Posterior vena cava (tissue), 2 donors: ENCODE measurements at regions of chr1 and their contacts with region 1.

Region 1: DNA sequence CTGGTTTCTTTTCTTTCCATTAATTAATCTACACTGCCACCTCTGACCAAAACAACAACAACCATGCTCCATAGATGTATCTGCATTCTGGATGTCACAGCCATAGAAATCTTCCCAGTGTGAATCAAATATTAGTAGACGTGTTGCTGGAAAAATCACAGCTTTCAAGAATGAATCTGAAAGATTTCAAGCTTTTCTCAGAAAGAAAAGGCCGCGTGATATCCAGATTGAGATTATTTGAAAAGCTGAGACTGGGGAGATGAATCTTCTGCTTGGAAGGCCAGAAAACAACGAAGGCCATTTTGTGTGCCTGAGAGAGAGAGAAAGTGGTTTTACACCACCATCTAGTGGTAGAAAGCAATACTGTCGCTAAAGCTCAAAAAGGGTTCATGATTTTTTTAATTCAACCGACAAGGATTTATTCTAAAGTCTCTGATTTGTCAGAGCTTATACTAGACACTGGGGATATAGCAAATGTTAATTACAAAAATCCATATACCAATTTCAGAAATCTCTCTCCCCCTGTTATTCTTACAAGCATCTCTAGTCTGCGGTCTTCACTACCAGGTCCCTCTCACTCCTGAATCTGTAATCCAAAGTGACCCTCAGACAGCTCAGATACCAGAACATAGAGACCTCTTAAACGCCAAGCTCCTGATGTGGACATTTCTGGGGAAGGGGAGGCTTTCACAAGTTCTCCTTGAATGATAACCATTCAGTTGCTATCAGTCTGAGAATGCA is 87.5 kb upstream of the SGIP1 start:
- DNase-seq: no peak

Region 2: GRCh38 chr1:65230731-65231481 is 1215.5 kb before region 1 on chr1:
- intact Hi-C with region 1: loop called in 1 of 2 experiments (anchors 5 kb)
- DNase-seq: no peak

Region 3: DNA sequence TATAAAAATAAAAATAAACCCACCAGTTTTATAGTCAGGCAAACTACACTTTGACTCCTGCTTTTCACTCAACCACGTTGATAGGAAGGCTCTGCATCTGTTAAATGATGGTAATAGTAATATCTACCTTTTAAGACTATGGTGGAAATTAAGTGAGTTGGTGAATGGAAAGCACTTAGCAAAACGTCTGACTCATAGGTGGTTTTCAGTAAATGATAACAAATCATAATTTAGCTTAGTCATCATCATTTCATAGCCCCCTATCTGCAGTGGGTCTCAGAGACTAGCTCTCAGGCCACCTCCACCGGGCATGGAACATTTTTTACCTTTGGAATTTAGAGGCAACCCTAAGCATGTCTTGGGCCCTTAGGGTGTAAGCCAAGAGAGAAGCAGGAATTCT is 493.7 kb before region 1 on chr1:
- intact Hi-C with region 1: loop called in 1 of 2 experiments (anchors 5 kb)
- DNase-seq: no peak

Region 4: GRCh38 chr1:66253330-66253921 is 193.0 kb before region 1 on chr1:
- intact Hi-C with region 1: loop called (anchors 5 kb)
- DNase-seq: no peak

Region 5: DNA sequence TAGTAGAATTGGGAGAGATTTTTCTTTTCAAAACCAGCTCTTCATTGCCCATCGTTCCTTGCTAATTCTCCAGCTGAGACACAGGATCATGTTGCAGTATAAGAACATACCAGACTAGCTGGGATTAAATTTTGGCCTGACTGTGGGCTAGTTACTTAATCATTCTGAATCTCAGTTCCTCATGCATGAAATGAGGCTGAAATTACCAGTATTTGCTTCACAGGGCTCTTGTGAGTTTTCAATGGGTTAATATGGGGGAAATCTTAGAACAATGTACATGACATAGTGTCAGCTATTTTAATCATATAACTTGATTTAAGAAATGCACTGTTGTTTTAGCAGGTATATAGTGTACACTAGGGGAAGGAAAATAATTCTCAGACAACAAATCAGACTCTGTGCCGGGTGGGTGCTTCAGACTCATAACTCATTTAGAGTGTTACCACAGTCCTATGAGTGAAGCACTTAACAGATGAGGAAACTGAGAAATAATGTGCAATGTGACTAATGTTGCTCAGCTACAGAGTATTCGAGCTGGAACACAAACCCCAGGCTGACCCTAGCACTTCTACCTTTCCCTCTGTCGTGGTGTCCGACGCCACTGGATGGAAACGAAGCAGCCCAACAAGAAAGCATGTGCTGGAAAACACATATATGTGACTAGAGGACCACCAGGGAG is 50.1 kb before region 1 on chr1:
- intact Hi-C with region 1: loop called in 1 of 2 experiments (anchors 10 kb)
- DNase-seq: no peak